ENCODE measurements at regions of chr14 and their contacts with region 1.

Region 1: DNA sequence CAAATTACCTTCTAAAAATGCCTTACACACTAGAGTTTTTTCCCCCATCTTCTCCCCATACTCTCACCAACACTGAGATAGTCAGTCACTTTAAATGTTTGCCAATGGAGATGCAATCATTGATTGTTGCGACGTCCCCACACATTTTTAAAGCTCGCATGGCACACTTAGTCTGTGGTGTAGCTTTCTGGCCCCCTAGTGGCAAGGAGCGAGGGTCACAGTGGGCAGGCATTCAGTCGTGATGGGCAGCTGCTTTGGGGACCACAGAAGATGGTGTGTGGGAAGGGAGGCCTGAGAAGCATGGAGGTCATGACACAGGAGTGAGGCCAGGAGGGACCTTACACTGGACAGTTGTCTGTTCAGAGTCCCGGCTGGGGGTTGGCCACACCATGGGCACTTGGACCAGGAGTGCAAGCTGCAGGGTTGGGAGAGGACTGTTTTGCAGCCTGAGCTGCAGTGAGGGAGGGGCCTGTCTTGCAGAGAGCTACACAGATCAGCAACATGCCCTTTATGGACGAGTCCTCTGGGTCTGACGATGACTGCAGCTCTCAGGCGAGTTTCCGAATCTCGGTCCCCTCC is 28.7 kb downstream of the PIGH start:
- DNase-seq: peak; percentile 84
- ATAC-seq: peak; percentile 96
- H3K4me3 Mint-ChIP-seq: no peak overlapping the region
- H3K27ac Mint-ChIP-seq: no peak overlapping the region
- H3K4me1 Mint-ChIP-seq: peaks cover 3% of the 10 kb centered on the region
- H3K27me3 Mint-ChIP-seq: no peaks in the 10 kb centered on the region
- CTCF ChIP-seq: peak; percentile 83

Region 2: GRCh38 chr14:67405771-67406170 is 165.6 kb before region 1 on chr14:
- CTCF ChIA-PET with region 1: interaction called, 11 read pairs
- POLR2A ChIA-PET with region 1: no interaction called
- intact Hi-C with region 1: no loop called
- DNase-seq: no peak
- ATAC-seq: no peak
- H3K4me3 Mint-ChIP-seq: no peak overlapping the region
- H3K27ac Mint-ChIP-seq: no peak overlapping the region
- H3K4me1 Mint-ChIP-seq: no peaks in the 10 kb centered on the region
- H3K27me3 Mint-ChIP-seq: no peaks in the 10 kb centered on the region
- CTCF ChIP-seq: no peak

Region 3: GRCh38 chr14:67467179-67468080 is 103.9 kb before region 1 on chr14:
- CTCF ChIA-PET with region 1: interaction called, 11 read pairs
- POLR2A ChIA-PET with region 1: no interaction called
- intact Hi-C with region 1: no loop called
- DNase-seq: no peak
- ATAC-seq: no peak
- H3K4me3 Mint-ChIP-seq: no peak overlapping the region
- H3K27ac Mint-ChIP-seq: no peak overlapping the region
- H3K4me1 Mint-ChIP-seq: peaks cover 27% of the 10 kb centered on the region
- H3K27me3 Mint-ChIP-seq: no peaks in the 10 kb centered on the region
- CTCF ChIP-seq: no peak

Region 4: GRCh38 chr14:67526676-67527459 is 44.5 kb before region 1 on chr14:
- CTCF ChIA-PET with region 1: interaction called, 104 read pairs
- POLR2A ChIA-PET with region 1: interaction called, 5 read pairs
- intact Hi-C with region 1: loop called (anchors 5 kb)
- DNase-seq: peak; percentile 65
- ATAC-seq: peak; percentile 94
- H3K4me3 Mint-ChIP-seq: no peak overlapping the region
- H3K27ac Mint-ChIP-seq: no peak overlapping the region
- H3K4me1 Mint-ChIP-seq: no peaks in the 10 kb centered on the region
- H3K27me3 Mint-ChIP-seq: peaks cover 19% of the 10 kb centered on the region
- CTCF ChIP-seq: peak; percentile 71

Region 5: DNA sequence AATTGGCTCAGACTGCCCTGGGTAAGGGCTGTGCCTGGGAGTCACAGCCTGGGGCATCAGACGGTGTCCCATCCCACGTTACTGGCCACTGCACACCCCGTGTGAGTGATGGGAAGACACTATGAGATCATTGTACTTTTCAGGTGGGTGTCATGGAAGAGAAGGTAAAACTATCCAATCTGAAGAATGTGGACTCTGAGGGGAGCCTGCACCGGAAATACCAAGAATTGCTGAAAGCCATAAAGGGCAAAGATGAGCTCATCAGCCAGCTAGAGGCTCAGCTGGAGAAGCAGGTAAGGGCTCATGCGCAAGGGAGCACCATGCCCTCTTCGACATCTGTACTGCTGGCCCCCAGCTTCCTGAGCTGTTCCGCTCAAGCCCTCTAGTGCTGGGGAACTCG is 14.2 kb before region 1 on chr14:
- CTCF ChIA-PET with region 1: interaction called, 36 read pairs
- POLR2A ChIA-PET with region 1: interaction called, 3 read pairs
- intact Hi-C with region 1: no loop called
- DNase-seq: peak; percentile 34
- ATAC-seq: peak; percentile 82
- H3K4me3 Mint-ChIP-seq: no peak overlapping the region
- H3K27ac Mint-ChIP-seq: no peak overlapping the region
- H3K4me1 Mint-ChIP-seq: peaks cover 3% of the 10 kb centered on the region
- H3K27me3 Mint-ChIP-seq: no peaks in the 10 kb centered on the region
- CTCF ChIP-seq: no peak

Region 6: GRCh38 chr14:67704484-67705089 is 133.2 kb after region 1 on chr14:
- CTCF ChIA-PET with region 1: interaction called, 28 read pairs
- POLR2A ChIA-PET with region 1: no interaction called
- intact Hi-C with region 1: no loop called
- DNase-seq: peak; percentile 44
- ATAC-seq: peak; percentile 89
- H3K4me3 Mint-ChIP-seq: no peak overlapping the region
- H3K27ac Mint-ChIP-seq: no peak overlapping the region
- H3K4me1 Mint-ChIP-seq: no peaks in the 10 kb centered on the region
- H3K27me3 Mint-ChIP-seq: peaks cover 2% of the 10 kb centered on the region
- CTCF ChIP-seq: peak; percentile 72